AG04450 (cell line): ENCODE measurements at regions of chr10 and their contacts with region 1.

Region 1: DNA sequence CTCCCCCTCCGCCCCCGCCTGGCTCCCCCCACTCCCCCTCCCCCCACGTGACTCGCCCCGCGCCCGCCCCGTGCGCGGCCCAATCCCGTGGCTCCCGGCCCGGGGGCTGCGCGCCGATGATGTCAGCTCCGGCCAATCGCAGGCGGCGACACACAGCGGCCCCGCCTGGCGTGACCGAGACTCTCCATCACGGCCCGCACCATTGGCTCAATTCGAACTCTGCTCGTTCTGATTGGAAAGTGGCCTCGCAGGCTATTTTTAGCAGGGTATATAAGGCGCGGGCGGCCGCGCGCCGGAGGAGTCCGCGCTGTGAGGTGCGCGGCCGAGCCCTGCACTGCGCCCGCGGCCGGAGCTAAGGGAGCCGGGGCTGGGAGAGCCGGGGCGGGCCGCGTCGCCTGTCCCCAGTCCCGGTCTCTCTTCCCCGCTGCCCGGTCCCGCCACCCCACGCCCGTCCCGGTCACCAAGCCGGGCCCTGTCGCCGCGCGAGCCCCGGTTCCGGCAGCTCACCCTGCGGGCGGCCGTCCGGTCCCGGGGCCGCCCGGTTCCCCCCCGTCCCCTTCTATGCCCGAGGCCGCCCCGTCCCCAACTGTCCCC is 345 bp upstream of the KLF6 start:
- DNase-seq: peak; percentile 95
- H3K4me3 ChIP-seq: peak overlapping the region; percentile 88
- H3K27ac ChIP-seq: peak overlapping the region; percentile 99
- H3K27me3 ChIP-seq: no peaks in the 10 kb centered on the region
- CTCF ChIP-seq: no peak

Region 2: GRCh38 chr10:3197348-3198003 is 587.9 kb before region 1 on chr10:
- CTCF ChIA-PET with region 1: interaction called, 5 read pairs
- POLR2A ChIA-PET with region 1: interaction called, 13 read pairs
- DNase-seq: peak; percentile 65
- H3K4me3 ChIP-seq: peak overlapping the region; percentile 53
- H3K27ac ChIP-seq: no peak overlapping the region
- H3K27me3 ChIP-seq: no peaks in the 10 kb centered on the region
- CTCF ChIP-seq: peak; percentile 97

Region 3: DNA sequence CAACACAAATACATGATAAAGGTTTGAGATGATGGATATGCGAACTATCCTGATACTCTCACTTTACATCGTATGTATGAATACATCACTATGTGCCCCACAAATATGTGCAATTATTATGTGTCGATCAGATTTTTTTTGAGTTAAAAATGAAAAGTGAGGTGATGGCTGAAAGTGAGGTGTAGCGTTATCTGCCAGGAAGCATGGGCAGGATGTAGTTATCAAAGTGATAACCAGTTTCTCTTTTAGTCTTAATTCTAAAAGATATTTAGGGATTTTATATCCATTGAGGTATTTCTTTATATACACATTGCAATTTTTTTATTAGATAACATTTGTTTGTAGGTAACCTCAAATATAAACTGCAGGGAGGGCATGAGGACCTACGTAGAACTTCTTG is 15.2 kb after region 1 on chr10:
- CTCF ChIA-PET with region 1: no interaction called
- POLR2A ChIA-PET with region 1: interaction called, 24 read pairs
- DNase-seq: no peak
- H3K4me3 ChIP-seq: no peak overlapping the region
- H3K27ac ChIP-seq: no peak overlapping the region
- H3K27me3 ChIP-seq: no peaks in the 10 kb centered on the region
- CTCF ChIP-seq: no peak

Region 4: DNA sequence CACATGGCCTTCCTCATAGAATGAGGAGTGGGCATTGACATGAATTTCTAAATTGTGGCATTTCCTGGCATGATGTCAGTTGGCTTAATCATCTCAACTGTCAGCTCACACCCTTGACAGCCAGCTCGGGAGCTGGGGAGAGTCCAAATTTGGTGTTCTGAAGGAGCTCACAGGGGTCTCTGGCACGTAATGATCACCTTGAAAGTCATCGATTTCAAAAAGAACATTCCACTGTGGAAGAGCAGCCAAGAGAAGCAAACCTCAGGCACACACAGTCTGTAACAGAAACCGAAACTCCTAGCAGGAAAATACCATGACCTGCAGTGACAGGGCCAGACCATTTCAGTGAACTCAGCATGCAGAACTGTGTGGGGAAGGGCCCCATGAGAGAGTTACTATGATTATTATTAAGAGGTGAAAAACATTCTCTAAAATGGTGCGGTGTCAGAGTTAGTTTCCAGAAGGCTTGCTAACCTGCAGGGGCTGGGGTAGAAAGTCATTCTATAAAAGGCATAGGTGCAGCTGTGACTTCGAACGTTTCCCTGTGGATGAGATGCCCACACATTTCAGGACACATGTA is 26.0 kb after region 1 on chr10:
- CTCF ChIA-PET with region 1: interaction called, 5 read pairs
- POLR2A ChIA-PET with region 1: interaction called, 30 read pairs
- DNase-seq: no peak
- H3K4me3 ChIP-seq: no peak overlapping the region; the same call in 1 of the 2 replicates
- H3K27ac ChIP-seq: peak overlapping the region; percentile 42
- H3K27me3 ChIP-seq: no peaks in the 10 kb centered on the region
- CTCF ChIP-seq: no peak

Region 5: DNA sequence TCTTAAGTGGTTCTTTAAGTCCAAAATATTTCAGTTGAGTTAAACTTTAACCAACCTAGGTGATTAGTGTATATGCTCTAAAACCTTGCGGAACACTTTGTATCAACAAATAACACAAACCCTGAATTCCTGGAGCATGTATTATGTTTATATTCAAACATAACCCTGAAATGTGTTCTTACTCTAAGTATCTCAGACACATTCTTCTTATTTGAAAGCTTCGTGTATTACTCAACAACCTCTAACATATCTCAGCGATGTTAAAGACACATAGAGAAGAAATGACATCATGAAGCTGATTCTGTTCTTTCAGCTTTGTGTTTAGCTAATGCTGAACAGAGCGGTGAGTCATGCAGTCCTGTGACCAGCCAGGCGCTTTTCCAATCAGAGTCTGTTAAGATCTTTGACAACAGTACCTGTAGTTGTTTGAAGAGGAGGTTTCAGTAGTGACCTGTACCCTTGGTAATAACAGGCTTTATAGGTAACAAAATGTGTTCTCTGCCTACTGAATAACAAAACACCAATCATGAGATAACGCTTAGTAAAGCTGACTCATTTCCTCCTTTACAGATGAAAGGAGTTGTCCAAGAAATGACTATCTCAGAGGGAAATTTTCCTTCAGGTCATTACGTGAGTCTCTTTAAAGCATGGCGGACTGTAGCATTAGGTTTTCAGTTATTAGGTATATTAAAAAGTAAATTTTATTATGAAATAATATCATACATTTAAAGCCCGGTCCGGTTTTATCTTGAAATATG is 67.0 kb after region 1 on chr10:
- CTCF ChIA-PET with region 1: no interaction called
- POLR2A ChIA-PET with region 1: interaction called, 100 read pairs
- DNase-seq: peak; percentile 95
- H3K4me3 ChIP-seq: no peak overlapping the region
- H3K27ac ChIP-seq: peak overlapping the region; percentile 88
- H3K27me3 ChIP-seq: no peaks in the 10 kb centered on the region
- CTCF ChIP-seq: no peak

Region 6: GRCh38 chr10:3906511-3907111 is 121.3 kb after region 1 on chr10:
- CTCF ChIA-PET with region 1: no interaction called
- POLR2A ChIA-PET with region 1: interaction called, 47 read pairs
- DNase-seq: peak; percentile 82
- H3K4me3 ChIP-seq: no peak overlapping the region; the same call in 1 of the 2 replicates
- H3K27ac ChIP-seq: peak overlapping the region; percentile 72
- H3K27me3 ChIP-seq: no peaks in the 10 kb centered on the region
- CTCF ChIP-seq: no peak

Region 7: DNA sequence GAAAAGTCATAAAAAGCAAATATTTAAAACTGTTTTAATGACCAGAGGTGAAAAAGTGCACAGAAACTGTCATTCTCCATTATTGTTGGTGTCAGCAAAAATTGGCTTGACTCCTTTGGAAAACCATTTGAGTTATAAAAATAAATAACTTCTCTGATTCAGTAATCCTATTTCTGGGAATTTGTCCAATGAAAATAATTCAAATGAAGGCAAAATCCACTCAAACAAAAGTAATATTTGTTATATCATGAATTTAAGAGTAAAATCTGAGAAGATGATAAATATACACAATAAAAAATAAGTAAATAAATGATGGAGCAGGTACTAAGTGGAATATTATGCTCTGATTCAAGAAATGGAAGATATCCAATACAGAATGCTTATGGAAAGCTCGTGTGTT is 326.3 kb after region 1 on chr10:
- CTCF ChIA-PET with region 1: no interaction called
- POLR2A ChIA-PET with region 1: no interaction called
- DNase-seq: no peak
- H3K4me3 ChIP-seq: no peak overlapping the region
- H3K27ac ChIP-seq: no peak overlapping the region
- H3K27me3 ChIP-seq: no peaks in the 10 kb centered on the region
- CTCF ChIP-seq: no peak

Region 8: DNA sequence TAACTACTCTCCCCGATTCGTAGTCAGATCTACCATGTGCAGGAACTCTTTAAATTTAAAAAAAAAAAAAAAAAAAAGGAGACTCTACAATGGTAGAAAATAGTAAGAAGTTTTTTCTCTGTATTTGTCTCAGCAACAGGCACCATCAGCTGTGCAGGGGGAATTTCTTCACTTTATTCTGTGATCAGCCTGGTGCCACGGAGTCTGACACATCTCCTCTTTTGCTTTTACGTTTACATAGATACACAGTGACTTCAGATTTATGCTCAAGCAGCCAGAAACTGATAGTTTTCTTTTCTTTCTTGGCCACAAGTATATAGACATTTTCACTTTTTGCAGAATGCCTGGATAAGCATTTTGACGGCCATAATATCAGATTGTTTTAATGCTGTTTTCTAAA is 850.0 kb after region 1 on chr10:
- CTCF ChIA-PET with region 1: no interaction called
- POLR2A ChIA-PET with region 1: interaction called, 12 read pairs
- DNase-seq: no peak
- H3K4me3 ChIP-seq: no peak overlapping the region
- H3K27ac ChIP-seq: no peak overlapping the region
- H3K27me3 ChIP-seq: no peaks in the 10 kb centered on the region
- CTCF ChIP-seq: no peak